AG04449 (cell line): ENCODE measurements at regions of chr11 and their contacts with region 1.

Region 1: DNA sequence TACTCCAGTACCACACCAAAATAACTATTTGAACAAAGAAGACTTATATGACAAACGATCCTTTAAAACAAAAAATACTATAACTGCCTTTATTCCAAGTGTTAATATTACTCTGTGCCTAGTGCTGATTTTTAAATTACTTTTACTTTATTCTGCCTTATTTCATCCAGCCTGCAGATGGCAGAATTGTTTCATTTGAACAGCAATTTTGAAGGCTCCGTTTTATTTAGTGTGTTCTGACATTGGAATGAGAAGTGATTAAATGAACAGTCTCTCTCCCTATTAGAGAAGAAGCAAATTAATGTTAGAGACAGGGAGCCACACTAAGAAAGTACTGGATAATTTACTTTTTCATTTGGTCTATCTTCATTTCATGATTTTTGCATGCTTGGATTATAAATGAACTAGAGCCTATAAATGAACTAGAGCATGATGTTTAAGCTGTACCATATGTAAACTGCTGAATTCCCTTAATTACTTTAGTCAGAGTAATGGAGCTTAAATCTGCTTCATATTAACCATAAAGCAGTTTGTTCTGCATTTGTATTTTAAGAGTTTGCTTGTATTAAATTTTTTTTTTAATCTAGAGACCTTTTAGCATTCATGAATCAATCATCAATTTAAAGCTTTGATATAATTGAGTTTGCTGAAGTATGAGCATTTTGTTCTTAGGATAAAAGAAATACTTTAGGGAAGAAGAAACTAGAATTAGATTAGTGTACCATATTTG is 9.8 kb downstream of the PDHX start:
- DNase-seq: no peak
- H3K4me3 ChIP-seq: no peak overlapping the region
- CTCF ChIP-seq: peak; percentile 25

Region 2: DNA sequence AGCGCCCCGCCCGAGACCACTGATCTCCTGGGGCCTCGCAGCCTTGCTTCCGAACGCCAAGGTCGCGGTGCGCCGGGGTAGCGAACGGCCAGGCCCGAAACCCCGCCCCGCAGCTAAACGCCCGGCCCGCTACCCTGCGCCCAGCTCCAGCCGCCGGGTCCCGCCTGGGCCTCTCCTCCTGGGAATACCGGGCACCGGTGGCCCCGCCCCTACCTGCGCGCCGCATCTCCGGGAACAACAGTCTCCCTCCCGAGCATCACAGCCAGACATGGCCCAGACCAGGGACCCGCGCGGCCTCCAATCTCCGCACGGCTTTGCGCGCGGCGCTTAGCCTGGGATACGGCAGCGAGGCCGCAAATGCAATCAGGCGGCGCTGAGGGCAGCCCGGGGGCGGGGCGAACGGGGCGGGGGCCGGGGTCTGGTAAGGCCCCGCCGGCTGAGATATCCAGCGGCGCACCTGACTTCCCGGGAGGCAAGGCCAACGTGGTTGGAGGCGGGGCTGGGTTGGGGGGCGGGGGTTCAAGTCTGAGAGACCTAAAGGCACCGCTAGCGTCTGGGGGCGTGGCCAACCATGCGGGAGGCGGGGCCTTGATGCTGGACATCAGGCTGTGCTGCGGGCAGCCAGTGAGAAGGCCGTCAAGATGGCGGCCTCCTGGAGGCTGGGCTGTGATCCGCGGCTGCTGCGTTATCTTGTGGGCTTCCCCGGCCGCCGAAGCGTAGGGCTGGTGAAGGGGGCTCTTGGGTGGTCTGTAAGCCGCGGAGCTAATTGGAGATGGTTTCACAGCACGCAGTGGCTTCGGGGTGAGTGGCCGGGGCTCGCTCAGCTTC is 10.0 kb before region 1 on chr11 and contains the starts of genes APIP and PDHX:
- CTCF ChIA-PET with region 1: interaction called, 15 read pairs
- POLR2A ChIA-PET with region 1: interaction called, 3 read pairs
- DNase-seq: peak; percentile 87
- H3K4me3 ChIP-seq: peak within 1 kb of the TSS; percentile 91
- CTCF ChIP-seq: no peak

Region 3: DNA sequence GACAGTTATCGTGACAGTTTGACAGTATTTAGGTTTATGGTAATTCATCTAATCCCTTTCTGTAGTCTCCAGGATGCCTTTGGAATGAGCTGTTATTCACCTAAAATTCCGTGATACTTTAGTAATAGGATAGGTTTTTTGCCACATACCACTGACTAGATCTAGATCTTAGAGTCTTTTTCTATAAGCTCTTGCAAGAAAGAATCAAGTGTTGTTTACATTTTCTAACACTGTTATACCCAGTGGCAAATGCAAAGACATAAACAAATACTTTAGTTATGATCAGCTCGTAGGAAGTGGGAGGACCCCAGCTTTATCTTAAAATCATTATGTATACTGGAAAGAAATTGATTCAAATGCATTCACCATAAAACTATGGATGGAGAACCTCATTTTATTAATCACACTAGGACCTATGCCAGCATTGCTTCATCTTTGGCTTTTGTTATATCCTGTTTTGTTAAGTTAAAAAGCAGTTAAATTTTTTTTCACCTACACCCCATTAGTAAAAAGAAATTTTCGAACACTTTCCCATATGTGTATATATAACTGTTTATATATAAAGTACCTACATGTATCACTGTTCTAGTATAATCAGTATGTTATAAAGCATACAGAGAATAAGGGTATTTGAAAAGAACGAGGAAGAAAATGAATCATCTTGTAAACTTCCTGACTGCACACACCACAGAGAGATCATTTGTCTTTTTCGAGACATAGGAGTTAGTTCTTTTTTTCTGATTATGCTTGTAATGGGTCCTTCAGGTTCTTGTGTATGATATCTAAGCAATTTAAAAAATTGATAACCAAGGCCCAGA is 51.0 kb after region 1 on chr11:
- CTCF ChIA-PET with region 1: interaction called, 10 read pairs
- POLR2A ChIA-PET with region 1: no interaction called
- DNase-seq: peak; percentile 66
- H3K4me3 ChIP-seq: no peak overlapping the region
- CTCF ChIP-seq: no peak

Region 4: GRCh38 chr11:35305670-35306382 is 379.6 kb after region 1 on chr11:
- CTCF ChIA-PET with region 1: interaction called, 19 read pairs
- POLR2A ChIA-PET with region 1: no interaction called
- DNase-seq: no peak
- H3K4me3 ChIP-seq: no peak overlapping the region
- CTCF ChIP-seq: peak; percentile 60

Region 5: DNA sequence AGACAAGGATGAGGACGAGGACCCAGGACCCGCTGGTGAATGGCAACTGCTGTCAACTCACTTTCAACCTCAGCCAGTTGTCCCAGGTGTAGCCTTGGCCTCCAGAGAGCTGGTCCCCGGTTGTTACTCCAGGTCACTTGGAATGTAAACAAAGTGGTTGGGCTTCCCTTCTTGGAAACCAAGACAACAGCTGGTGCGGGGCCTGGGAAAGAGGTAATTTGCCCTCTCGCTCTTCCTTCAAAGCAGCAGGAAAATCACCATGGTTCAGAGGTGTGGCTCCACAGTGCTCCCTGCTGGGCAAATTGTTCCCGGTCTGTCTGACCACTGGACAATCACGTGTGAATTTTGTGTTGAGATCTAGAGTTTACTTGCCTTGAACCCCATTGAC is 478.1 kb after region 1 on chr11:
- CTCF ChIA-PET with region 1: interaction called, 18 read pairs
- POLR2A ChIA-PET with region 1: no interaction called
- DNase-seq: no peak
- H3K4me3 ChIP-seq: no peak overlapping the region
- CTCF ChIP-seq: peak; percentile 47

Region 6: DNA sequence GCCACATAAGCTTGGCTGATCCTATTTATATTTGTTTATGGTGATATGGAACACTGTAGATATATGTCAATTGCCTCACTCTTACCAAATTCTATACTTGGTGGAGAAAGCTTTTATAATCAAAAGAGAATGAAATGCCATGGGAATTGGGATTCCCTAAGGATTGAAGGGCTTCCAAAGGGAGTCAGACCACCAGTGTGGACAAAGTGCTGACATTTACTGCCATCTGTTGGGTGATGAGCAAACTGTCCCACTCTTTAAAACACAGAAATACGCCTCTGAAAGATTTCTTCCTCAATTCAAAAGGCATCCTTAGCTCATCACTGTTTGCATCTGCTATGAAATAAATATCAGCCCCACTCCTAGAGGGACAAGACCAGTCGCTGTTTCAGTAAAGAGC is 486.0 kb after region 1 on chr11:
- CTCF ChIA-PET with region 1: interaction called, 15 read pairs
- POLR2A ChIA-PET with region 1: no interaction called
- DNase-seq: no peak
- H3K4me3 ChIP-seq: no peak overlapping the region
- CTCF ChIP-seq: peak; percentile 44